Sigmoid colon (tissue), 7 donors: ENCODE measurements at regions of chr19 and their contacts with region 1.

Region 1: DNA sequence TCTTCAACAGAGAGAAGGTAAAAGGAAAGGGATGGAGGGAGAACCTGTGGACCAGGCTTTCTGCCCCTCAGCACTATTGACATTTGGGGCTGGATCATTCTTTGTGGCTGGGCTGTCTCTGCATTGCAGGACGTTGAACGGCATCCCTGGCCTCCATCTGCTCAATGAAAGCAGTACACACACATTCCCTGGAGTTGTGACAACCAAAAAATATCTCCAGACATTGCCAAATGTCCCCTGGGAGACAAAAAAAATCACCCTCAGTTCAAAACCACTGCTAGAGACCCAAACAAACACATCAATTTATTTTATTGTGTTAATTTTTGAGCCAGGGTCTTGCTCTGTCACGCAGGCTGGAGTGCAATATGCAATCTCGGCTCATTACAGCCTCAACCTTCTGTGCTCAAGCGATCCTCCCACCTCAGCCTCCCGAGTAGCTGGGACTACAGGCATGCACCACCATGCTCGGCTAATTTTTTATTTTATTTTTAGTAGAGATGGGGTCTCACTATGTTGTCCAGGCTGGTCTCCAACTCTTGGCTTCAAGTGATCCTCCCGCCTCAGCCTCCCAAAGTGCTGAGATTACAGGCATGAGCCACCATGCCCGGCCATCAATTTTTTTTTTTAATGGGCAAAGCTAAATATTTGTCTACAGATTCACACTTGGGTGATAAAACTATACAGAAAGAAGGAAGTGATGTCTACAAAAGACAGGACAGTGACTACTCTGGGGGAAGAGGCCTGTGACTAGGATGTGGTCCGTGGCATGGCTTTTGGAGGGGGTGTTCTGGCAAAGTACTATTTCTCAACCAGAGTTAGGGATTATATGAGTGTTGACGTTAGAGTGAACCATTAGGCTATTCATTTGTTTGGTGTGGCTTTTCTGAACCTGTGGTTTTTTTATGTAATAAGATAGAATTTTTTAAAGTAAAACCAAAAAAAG is 43.0 kb downstream of the INSR start:
- DNase-seq: no peak
- H3K4me3 ChIP-seq: no peak overlapping the region
- H3K27ac ChIP-seq: peak overlapping the region in 1 of 4 donors; percentile 48
- H3K4me1 ChIP-seq: peaks cover 0 to 25% (median 6%) of the 10 kb centered on the region in 4 donors
- H3K27me3 ChIP-seq: no peaks in the 10 kb centered on the region
- CTCF ChIP-seq: no peak
- EP300 ChIP-seq: no peak
- POLR2A ChIP-seq: no peak

Region 2: DNA sequence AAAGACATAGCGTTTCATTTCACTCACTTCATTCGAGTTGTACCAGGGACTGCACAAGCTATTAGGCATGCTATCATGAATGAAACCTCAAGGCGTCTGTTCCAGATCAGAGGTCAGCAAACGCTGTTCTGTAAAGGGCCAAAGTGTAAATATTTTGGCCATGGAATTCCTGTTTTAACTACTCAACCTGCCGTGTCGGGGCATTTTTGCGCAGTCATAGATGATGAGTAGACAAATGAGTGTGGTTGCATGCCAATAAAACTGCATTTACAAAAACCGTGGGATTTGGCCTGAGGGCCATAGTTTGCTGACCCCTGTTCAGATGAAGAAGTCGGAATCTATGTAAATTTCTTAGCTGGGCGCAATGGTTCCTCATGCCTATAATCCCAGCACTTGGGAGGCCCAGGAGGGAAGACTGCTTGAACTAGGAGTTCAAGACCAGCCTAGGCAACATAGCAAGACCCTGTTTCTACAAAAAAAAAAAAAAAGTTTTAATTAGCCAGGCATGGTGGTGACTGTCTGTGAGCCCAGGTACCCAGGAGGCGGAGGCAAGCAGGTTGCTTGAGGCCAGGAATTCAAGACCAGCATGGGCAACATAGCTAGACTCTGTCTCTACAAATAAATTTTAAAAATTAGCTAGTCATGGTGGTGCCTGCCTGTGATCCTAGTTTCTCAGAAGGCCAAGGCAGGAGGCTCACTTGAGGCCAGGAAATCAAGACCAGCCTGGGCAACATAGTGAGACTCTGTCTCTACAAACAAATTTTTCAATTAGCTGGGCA is 36.7 kb after region 1 on chr19:
- intact Hi-C with region 1: loop called (anchors 5 kb)
- DNase-seq: no peak
- H3K4me3 ChIP-seq: no peak overlapping the region
- H3K27ac ChIP-seq: peak overlapping the region; percentile 5 to 94 (median 44)
- H3K4me1 ChIP-seq: peaks cover 0 to 36% (median 34%) of the 10 kb centered on the region in 4 donors
- H3K27me3 ChIP-seq: no peaks in the 10 kb centered on the region
- CTCF ChIP-seq: no peak
- EP300 ChIP-seq: no peak
- POLR2A ChIP-seq: no peak